MCF 10A (cell line): ENCODE measurements at regions of chr2 and their contacts with region 1.

Region 1: DNA sequence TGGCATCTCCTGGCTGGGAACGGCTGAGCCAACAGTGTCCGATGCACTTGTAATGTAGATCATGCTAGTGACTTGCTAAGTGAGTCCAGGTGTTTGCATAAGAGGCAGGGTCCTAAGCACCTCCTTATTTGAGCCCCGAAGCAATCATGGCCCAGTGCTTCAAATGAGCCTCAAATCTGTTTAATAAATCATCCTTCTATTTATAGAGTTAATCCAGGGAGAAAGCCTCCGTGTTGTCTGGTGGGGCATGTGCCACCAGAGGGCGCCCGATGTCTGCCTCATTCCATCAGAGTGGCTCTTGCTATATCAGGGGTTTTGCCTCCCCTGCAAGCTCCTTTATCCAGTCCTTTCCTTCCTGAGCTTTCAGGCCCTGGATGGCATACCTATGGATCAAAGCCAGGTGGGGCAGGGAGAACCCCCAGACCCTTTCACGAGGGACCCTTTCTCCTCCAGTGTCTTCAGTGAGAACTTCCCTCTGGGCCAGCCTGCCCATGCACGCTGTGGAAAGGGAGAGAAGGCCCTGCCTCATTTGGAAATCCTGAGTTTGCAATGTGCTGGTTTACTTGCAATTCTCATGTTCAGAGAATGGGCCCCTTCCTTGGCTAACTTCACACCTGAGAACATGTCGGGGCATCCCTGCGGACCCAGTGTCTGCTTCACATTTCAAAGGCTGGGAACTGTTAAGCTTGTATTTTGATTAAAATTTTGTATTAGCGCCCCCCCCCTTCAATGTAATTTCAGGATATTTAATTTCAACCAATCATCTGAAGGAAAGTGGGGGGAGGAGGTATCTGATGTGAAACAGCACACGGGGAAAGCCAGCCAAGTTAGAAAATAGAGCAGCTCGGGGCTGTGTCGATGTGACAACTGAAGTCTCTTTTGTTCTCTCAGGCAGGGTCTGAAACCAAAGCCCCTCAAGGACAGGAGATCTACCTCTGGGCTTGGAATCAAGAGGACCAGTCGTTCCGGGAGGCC is 39.7 kb downstream of the RDH14 start:
- DNase-seq: peak; percentile 78
- H3K4me3 Mint-ChIP-seq: no peak overlapping the region
- H3K27ac Mint-ChIP-seq: no peak overlapping the region
- H3K4me1 Mint-ChIP-seq: no peaks in the 10 kb centered on the region
- H3K27me3 Mint-ChIP-seq: no peaks in the 10 kb centered on the region
- CTCF ChIP-seq: peak; percentile 95

Region 2: GRCh38 chr2:18387441-18388206 is 133.1 kb before region 1 on chr2:
- CTCF ChIA-PET with region 1: interaction called, 11 read pairs
- POLR2A ChIA-PET with region 1: no interaction called
- intact Hi-C with region 1: loop called (anchors 2 kb)
- DNase-seq: peak; percentile 75
- H3K4me3 Mint-ChIP-seq: no peak overlapping the region
- H3K27ac Mint-ChIP-seq: no peak overlapping the region
- H3K4me1 Mint-ChIP-seq: peaks cover 6% of the 10 kb centered on the region
- H3K27me3 Mint-ChIP-seq: peaks cover 4% of the 10 kb centered on the region
- CTCF ChIP-seq: peak; percentile 95

Region 3: GRCh38 chr2:18506883-18507509 is 13.7 kb before region 1 on chr2:
- CTCF ChIA-PET with region 1: interaction called, 32 read pairs
- POLR2A ChIA-PET with region 1: interaction called, 4 read pairs
- intact Hi-C with region 1: no loop called
- DNase-seq: no peak
- H3K4me3 Mint-ChIP-seq: no peak overlapping the region
- H3K27ac Mint-ChIP-seq: no peak overlapping the region
- H3K4me1 Mint-ChIP-seq: peaks cover 7% of the 10 kb centered on the region
- H3K27me3 Mint-ChIP-seq: no peaks in the 10 kb centered on the region
- CTCF ChIP-seq: no peak

Region 4: GRCh38 chr2:18585526-18585925 is 64.8 kb after region 1 on chr2:
- CTCF ChIA-PET with region 1: no interaction called
- POLR2A ChIA-PET with region 1: no interaction called
- intact Hi-C with region 1: no loop called
- DNase-seq: peak; percentile 11
- H3K4me3 Mint-ChIP-seq: no peak overlapping the region
- H3K27ac Mint-ChIP-seq: no peak overlapping the region
- H3K4me1 Mint-ChIP-seq: peaks cover 10% of the 10 kb centered on the region
- H3K27me3 Mint-ChIP-seq: no peaks in the 10 kb centered on the region
- CTCF ChIP-seq: no peak

Region 5: DNA sequence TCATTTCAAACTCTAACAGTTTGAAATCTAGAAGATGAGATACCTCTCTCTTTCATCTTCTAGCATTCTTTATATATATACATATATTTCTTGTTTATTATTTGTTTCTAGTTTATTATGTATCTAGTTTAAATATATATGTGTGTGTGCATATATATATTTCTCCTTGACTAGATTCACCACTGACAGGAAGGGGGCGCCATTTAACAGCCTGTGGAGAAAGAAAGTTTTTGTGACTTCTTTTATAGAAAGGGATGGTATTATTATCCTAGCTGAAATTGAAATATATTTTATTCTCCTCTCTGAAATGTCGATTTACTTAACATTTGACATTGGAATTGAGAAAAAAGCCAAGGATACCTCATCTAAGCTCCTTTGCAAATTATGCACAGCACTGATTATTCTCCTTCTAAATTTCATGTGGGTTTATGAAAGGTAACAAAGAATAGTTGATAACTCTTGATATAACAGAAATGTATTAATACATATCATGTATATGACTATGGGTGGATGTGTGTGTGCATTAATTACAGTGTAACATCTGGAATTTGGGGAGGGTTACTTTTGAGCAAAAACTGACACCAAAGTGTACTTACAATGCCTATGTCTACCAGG is 229.3 kb after region 1 on chr2:
- CTCF ChIA-PET with region 1: interaction called, 8 read pairs
- POLR2A ChIA-PET with region 1: interaction called, 4 read pairs
- intact Hi-C with region 1: loop called (anchors 2 kb)
- DNase-seq: peak; percentile 76
- H3K4me3 Mint-ChIP-seq: no peak overlapping the region
- H3K27ac Mint-ChIP-seq: no peak overlapping the region
- H3K4me1 Mint-ChIP-seq: peaks cover 9% of the 10 kb centered on the region
- H3K27me3 Mint-ChIP-seq: no peaks in the 10 kb centered on the region
- CTCF ChIP-seq: peak; percentile 63

Region 6: GRCh38 chr2:19362755-19363473 is 842.2 kb after region 1 on chr2:
- CTCF ChIA-PET with region 1: interaction called, 21 read pairs
- POLR2A ChIA-PET with region 1: no interaction called
- intact Hi-C with region 1: loop called (anchors 1 kb)
- DNase-seq: peak; percentile 88
- H3K4me3 Mint-ChIP-seq: peak overlapping the region; percentile 87
- H3K27ac Mint-ChIP-seq: no peak overlapping the region
- H3K4me1 Mint-ChIP-seq: peaks cover 6% of the 10 kb centered on the region
- H3K27me3 Mint-ChIP-seq: no peaks in the 10 kb centered on the region
- CTCF ChIP-seq: peak; percentile 70

Region 7: GRCh38 chr2:19667085-19667484 is 1146.3 kb after region 1 on chr2:
- CTCF ChIA-PET with region 1: interaction called, 9 read pairs
- POLR2A ChIA-PET with region 1: no interaction called
- intact Hi-C with region 1: loop called (anchors 5 kb)
- DNase-seq: peak; percentile 59
- H3K4me3 Mint-ChIP-seq: no peak overlapping the region
- H3K27ac Mint-ChIP-seq: no peak overlapping the region
- H3K4me1 Mint-ChIP-seq: no peaks in the 10 kb centered on the region
- H3K27me3 Mint-ChIP-seq: no peaks in the 10 kb centered on the region
- CTCF ChIP-seq: peak; percentile 60